ENCODE measurements at regions of chr16 and their contacts with region 1.

Region 1: GRCh38 chr16:53945996-53946395 is 242.0 kb downstream of the FTO start:
- DNase-seq: peak; percentile 57
- ATAC-seq: peak; percentile 81
- H3K4me3 ChIP-seq: no peak overlapping the region
- H3K27ac ChIP-seq: no peak overlapping the region
- H3K4me1 ChIP-seq: peaks cover 39% of the 10 kb centered on the region
- H3K27me3 ChIP-seq: no peaks in the 10 kb centered on the region
- CTCF ChIP-seq: peak; percentile 86
- EP300 ChIP-seq: peak in 1 of 2 experiments; percentile 14; a peak in 1 of 4 replicates
- POLR2A ChIP-seq: no peak
- RAD21 ChIP-seq: peak; percentile 86

Region 2: DNA sequence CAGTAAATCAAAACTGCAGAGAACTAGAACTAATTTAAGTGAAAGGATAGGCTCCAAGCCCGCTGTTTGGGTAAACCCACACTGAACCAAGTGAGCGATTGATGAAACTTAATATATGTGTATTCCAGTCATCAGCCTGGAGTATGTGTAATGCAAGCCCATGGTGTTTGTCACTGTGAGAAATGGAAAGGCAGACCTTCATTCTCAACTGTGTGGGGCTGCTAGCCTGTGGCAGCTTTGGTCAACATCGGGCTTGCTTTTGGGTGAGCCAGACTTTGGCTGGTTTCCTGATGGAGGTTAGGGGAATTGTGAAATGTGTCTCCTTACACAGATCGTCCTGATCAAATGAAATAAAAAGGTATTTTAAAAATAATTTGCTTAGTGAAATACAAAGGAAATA is 60.7 kb after region 1 on chr16:
- CTCF ChIA-PET with region 1: no interaction called
- POLR2A ChIA-PET with region 1: no interaction called
- in situ Hi-C with region 1: no loop called
- intact Hi-C with region 1: no loop called
- DNase-seq: no peak
- ATAC-seq: no peak
- H3K4me3 ChIP-seq: no peak overlapping the region
- H3K27ac ChIP-seq: no peak overlapping the region
- H3K4me1 ChIP-seq: no peaks in the 10 kb centered on the region
- H3K27me3 ChIP-seq: no peaks in the 10 kb centered on the region
- CTCF ChIP-seq: no peak
- EP300 ChIP-seq: no peak
- POLR2A ChIP-seq: no peak
- RAD21 ChIP-seq: no peak

Region 3: GRCh38 chr16:54171626-54172525 is 225.9 kb after region 1 on chr16:
- CTCF ChIA-PET with region 1: no interaction called
- POLR2A ChIA-PET with region 1: interaction called, 7 read pairs
- in situ Hi-C with region 1: no loop called
- intact Hi-C with region 1: loop called (anchors 1 kb)
- DNase-seq: peak; percentile 46
- ATAC-seq: no peak
- H3K4me3 ChIP-seq: peak overlapping the region in 1 of 3 experiments; percentile 49; a peak in 2 of 6 replicates
- H3K27ac ChIP-seq: peak overlapping the region; percentile 65
- H3K4me1 ChIP-seq: peaks cover 77% of the 10 kb centered on the region
- H3K27me3 ChIP-seq: no peaks in the 10 kb centered on the region
- CTCF ChIP-seq: no peak
- EP300 ChIP-seq: 0 out of 4 replicates have a peak, but pooled peaks of 1 of the 2 experiments have one; percentile 18
- POLR2A ChIP-seq: peak in 1 of 2 experiments; percentile 44; a peak in 1 of 4 replicates
- RAD21 ChIP-seq: no peak

Region 4: DNA sequence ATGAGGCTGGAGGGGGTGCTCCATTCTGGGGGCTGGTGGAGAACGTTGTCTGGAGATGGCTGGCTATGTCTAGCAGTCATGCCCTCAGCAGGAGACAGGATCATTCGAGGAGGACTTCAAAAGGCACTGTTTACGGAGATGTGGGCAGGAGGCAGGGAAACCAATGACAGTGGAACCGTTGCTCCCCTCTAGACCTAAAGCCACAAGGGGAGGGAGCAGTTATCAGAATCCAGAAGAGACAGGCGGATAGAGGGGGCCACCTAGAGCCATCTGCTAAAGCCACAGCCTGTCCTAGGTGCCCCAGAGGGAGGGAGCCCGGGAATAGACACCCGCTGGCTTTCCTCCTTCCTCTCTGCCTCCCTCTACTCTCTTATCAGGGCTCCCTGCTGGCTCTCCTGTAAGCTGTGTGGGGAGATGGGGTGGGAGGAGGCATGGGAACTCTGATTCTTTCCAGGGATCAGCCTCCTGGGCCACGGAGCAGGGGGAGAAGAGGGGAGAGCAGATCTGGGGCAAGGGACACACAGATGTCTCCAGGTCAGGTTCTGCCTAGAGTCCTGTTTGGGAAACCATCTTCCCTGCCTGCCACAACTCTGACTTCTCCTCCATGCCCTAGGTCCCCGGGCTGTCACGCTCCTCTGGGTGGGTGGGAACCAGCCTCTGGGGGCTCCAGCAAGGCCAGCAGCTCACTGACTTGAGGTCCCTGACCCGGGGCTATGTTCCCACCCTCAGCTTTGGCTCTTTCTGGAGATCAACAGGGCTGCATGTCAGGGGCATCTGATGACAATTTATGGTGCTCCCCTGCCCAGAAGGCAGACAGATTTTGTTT is 298.3 kb after region 1 on chr16:
- CTCF ChIA-PET with region 1: no interaction called
- POLR2A ChIA-PET with region 1: no interaction called
- in situ Hi-C with region 1: no loop called
- intact Hi-C with region 1: loop called (anchors 1 kb)
- DNase-seq: peak; percentile 77
- ATAC-seq: peak; percentile 95
- H3K4me3 ChIP-seq: peak overlapping the region in 2 of 3 experiments; percentile 10 to 56; a peak in 4 of 6 replicates
- H3K27ac ChIP-seq: no peak overlapping the region
- H3K4me1 ChIP-seq: peaks cover 27% of the 10 kb centered on the region
- H3K27me3 ChIP-seq: peaks cover under 1 to 11% of the 10 kb centered on the region in 2 experiments; a peak in 2 of 5 replicates
- CTCF ChIP-seq: peak; percentile 84
- EP300 ChIP-seq: peak in 1 of 2 experiments; percentile 12; a peak in 1 of 4 replicates
- POLR2A ChIP-seq: no peak
- RAD21 ChIP-seq: peak; percentile 85

Region 5: DNA sequence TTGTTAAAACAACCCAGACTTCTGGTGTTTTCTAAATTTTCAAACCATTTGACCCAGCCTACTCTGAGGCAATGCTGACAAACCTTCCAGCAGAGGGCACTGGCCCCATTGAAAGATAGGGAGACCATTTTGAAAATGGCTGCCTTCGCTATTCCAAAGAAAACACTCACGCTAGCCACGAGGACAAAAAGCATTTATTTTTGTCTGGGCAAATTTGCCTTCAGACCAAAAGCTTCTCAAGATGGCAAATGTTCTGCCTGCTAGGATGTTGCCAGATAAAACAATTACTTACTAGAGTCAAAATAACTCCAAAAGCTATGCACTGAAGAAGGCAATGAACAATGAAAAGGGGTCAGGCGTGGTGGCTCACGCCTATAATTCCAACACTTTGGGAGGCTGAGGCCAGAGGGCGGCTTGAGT is 688.0 kb after region 1 on chr16:
- CTCF ChIA-PET with region 1: no interaction called
- POLR2A ChIA-PET with region 1: no interaction called
- in situ Hi-C with region 1: no loop called
- intact Hi-C with region 1: loop called (anchors 10 kb)
- DNase-seq: peak; percentile 14
- ATAC-seq: no peak
- H3K4me3 ChIP-seq: no peak overlapping the region
- H3K27ac ChIP-seq: no peak overlapping the region
- H3K4me1 ChIP-seq: peaks cover 9% of the 10 kb centered on the region
- H3K27me3 ChIP-seq: peaks cover 3 to 77% of the 10 kb centered on the region in 2 experiments; a peak in 4 of 5 replicates
- CTCF ChIP-seq: peak; percentile 35; the same call in 1 of the 2 replicates
- EP300 ChIP-seq: no peak
- POLR2A ChIP-seq: no peak
- RAD21 ChIP-seq: no peak

Region 6: DNA sequence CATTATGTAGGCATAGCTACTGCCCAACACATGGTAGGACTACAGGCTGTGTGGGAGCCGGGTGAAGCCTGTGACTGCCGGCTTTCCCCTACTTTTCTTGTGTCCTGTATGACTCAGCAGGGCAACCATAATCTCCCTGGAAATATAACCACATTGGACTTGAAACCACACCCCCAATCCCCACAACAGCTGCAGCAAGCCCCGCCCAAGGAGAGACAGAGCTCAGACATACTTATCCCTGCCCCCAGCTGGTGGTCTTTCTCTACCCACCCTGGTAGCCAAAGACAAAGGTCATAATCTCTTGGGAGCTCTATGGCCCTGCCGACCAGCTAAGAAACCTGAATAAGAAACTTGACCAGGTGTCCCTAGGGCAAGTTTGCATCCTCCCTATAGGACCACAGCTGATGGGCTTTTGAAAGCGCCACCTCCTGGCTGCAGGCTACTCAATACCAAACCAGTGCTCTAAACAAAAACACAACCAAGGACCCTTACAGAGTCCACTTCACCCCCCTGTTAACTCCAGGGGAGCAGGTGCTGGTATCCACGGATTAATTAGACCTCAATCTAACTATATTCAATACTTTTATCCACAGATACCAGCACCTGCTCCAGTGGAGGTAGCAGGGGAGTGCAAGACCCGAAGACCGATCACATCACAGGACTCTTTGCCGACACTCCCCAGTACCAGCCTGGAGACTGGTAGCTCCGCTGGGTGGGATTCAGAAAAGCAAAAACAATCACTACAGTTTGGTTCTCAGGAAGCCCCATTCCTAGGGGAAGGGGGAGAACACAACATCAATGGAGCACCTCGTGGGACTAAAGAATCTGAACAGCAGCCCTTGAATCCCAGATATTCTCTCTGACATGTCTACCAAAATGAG is 1075.8 kb after region 1 on chr16:
- CTCF ChIA-PET with region 1: interaction called, 4 read pairs
- POLR2A ChIA-PET with region 1: no interaction called
- in situ Hi-C with region 1: loop called (anchors 10 kb)
- intact Hi-C with region 1: no loop called
- DNase-seq: peak; percentile 23
- ATAC-seq: peak; percentile 89
- H3K4me3 ChIP-seq: no peak overlapping the region
- H3K27ac ChIP-seq: no peak overlapping the region
- H3K4me1 ChIP-seq: no peaks in the 10 kb centered on the region
- H3K27me3 ChIP-seq: no peaks in the 10 kb centered on the region
- CTCF ChIP-seq: peak; percentile 49
- EP300 ChIP-seq: no peak
- POLR2A ChIP-seq: no peak
- RAD21 ChIP-seq: no peak

Region 7: GRCh38 chr16:55465077-55465896 is 1519.3 kb after region 1 on chr16:
- CTCF ChIA-PET with region 1: no interaction called
- POLR2A ChIA-PET with region 1: no interaction called
- in situ Hi-C with region 1: no loop called
- intact Hi-C with region 1: loop called (anchors 5 kb)
- DNase-seq: peak; percentile 81
- ATAC-seq: peak; percentile 94
- H3K4me3 ChIP-seq: no peak overlapping the region
- H3K27ac ChIP-seq: no peak overlapping the region
- H3K4me1 ChIP-seq: no peaks in the 10 kb centered on the region
- H3K27me3 ChIP-seq: peaks cover 0 to 10% of the 10 kb centered on the region in 2 experiments; a peak in 2 of 5 replicates
- CTCF ChIP-seq: peak; percentile 100
- EP300 ChIP-seq: no peak
- POLR2A ChIP-seq: no peak
- RAD21 ChIP-seq: peak; percentile 100